KBM-7 (cell line): ENCODE measurements at regions of chr5 and their contacts with region 1.

Region 1: DNA sequence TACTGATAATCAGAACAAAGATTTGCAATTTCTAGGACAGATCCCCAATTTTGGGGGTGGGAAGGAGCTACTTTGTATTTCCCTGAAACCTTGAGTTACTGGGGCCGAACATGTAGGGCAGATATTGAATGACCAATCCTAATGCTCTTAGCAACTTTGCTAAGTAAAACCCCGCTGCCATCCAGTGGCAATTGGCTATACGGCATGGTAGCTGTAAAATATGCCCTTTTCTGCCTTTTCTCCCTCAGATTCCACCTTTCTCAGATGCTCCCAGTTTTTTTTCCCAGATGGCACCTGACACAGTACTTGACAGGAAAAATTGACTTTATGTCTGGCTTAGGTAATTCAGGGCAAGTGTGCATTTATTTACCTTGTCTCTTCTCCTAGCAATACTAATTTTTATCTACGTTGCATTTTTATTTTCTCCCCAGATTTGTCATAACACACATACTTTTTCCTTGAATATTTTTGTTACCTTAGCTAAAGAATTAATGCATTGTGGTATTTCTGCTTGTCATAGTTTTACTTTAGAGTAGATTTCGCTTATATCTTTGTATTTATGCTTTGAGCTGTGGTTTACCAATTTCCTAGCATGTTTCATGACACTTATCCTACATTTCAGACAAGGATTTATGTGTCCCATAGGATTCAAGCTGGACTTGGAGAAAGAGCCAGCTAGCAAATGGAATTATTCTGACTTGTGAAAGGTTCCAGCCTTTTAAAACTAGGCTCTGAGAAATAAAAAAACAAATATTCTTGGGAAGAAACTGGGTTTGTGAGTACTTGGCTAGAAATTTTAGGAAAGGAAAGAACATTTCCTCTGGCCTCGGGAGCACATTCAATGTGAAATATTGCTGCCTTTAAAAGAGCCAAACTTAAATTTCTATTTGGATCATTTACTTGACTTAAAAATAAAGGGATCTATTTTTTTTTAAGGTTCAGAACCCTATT is 37.4 kb downstream of the PIK3R1 start:
- DNase-seq: peak; percentile 63

Region 2: GRCh38 chr5:67246108-67246507 is 1006.8 kb before region 1 on chr5:
- in situ Hi-C with region 1: loop called (anchors 25 kb)
- DNase-seq: peak; percentile 85